ENCODE measurements at regions of chr3 and their contacts with region 1.

Region 1: GRCh38 chr3:47035634-47036033 is 56.2 kb downstream of the NBEAL2 start:
- DNase-seq: no peak
- ATAC-seq: no peak
- H3K4me3 ChIP-seq: no peak overlapping the region
- H3K4me3 Mint-ChIP-seq: no peak overlapping the region
- H3K27ac ChIP-seq: peak overlapping the region; percentile 19
- H3K27ac Mint-ChIP-seq: peak overlapping the region in 7 of 9 donors; percentile 40 to 87 (median 73)
- H3K4me1 ChIP-seq: peaks cover 9 to 14% of the 10 kb centered on the region in 2 donors
- H3K4me1 Mint-ChIP-seq: peaks cover 15 to 52% (median 36%) of the 10 kb centered on the region in 7 donors
- H3K27me3 ChIP-seq: no peaks in the 10 kb centered on the region
- H3K27me3 Mint-ChIP-seq: no peaks in the 10 kb centered on the region

Region 2: GRCh38 chr3:47057212-47057671 is 21.6 kb after region 1 on chr3:
- CTCF ChIA-PET with region 1: no interaction called
- POLR2A ChIA-PET with region 1: no interaction called
- intact Hi-C with region 1: loop called (anchors 1 to 2 kb)
- DNase-seq: peak in 8 of 9 donors; percentile 32 to 75 (median 58)
- ATAC-seq: peak; percentile 88
- H3K4me3 ChIP-seq: no peak overlapping the region
- H3K4me3 Mint-ChIP-seq: peak overlapping the region in 9 of 10 donors; percentile 15 to 60 (median 45)
- H3K27ac ChIP-seq: peak overlapping the region; percentile 23
- H3K27ac Mint-ChIP-seq: peak overlapping the region; percentile 51 to 91 (median 85)
- H3K4me1 ChIP-seq: peaks cover 15 to 18% of the 10 kb centered on the region in 2 donors
- H3K4me1 Mint-ChIP-seq: peaks cover 23 to 60% (median 47%) of the 10 kb centered on the region in 7 donors
- H3K27me3 ChIP-seq: no peaks in the 10 kb centered on the region
- H3K27me3 Mint-ChIP-seq: no peaks in the 10 kb centered on the region

Region 3: GRCh38 chr3:47073685-47074084 is 38.1 kb after region 1 on chr3:
- CTCF ChIA-PET with region 1: no interaction called
- POLR2A ChIA-PET with region 1: no interaction called
- intact Hi-C with region 1: loop called in 1 of 2 experiments (anchors 5 kb)
- DNase-seq: no peak
- ATAC-seq: no peak
- H3K4me3 ChIP-seq: no peak overlapping the region
- H3K4me3 Mint-ChIP-seq: no peak overlapping the region
- H3K27ac ChIP-seq: no peak overlapping the region
- H3K27ac Mint-ChIP-seq: peak overlapping the region in 1 of 9 donors; percentile 34
- H3K4me1 ChIP-seq: no peaks in the 10 kb centered on the region
- H3K4me1 Mint-ChIP-seq: peaks cover 7 to 52% (median 33%) of the 10 kb centered on the region in 7 donors
- H3K27me3 ChIP-seq: no peaks in the 10 kb centered on the region
- H3K27me3 Mint-ChIP-seq: no peaks in the 10 kb centered on the region

Region 4: GRCh38 chr3:47152578-47152977 is 116.9 kb after region 1 on chr3:
- CTCF ChIA-PET with region 1: no interaction called
- POLR2A ChIA-PET with region 1: no interaction called
- intact Hi-C with region 1: no loop called
- DNase-seq: no peak
- ATAC-seq: no peak
- H3K4me3 ChIP-seq: no peak overlapping the region
- H3K4me3 Mint-ChIP-seq: peak overlapping the region in 9 of 10 donors; percentile 1 to 65 (median 48)
- H3K27ac ChIP-seq: no peak overlapping the region
- H3K27ac Mint-ChIP-seq: peak overlapping the region in 4 of 9 donors; percentile 14 to 62 (median 39)
- H3K4me1 ChIP-seq: peaks cover 17 to 23% of the 10 kb centered on the region in 2 donors
- H3K4me1 Mint-ChIP-seq: peaks cover 39 to 92% (median 85%) of the 10 kb centered on the region in 7 donors
- H3K27me3 ChIP-seq: no peaks in the 10 kb centered on the region
- H3K27me3 Mint-ChIP-seq: no peaks in the 10 kb centered on the region

Measured in naive thymus-derived CD4-positive, alpha-beta T cell (primary cell).